CD4-positive, alpha-beta memory T cell (primary cell): ENCODE measurements at regions of chr7 and their contacts with region 1.

Region 1: GRCh38 chr7:150631866-150632864 is at the start of gene GIMAP6:
- DNase-seq: peak; percentile 36 to 51 (median 44)
- H3K4me3 ChIP-seq: peak within 1 kb of the TSS; percentile 69 to 75
- H3K4me3 Mint-ChIP-seq: peak within 1 kb of the TSS; percentile 93 to 100 (median 98)
- H3K27ac ChIP-seq: peak within 1 kb of the TSS; percentile 64
- H3K27ac Mint-ChIP-seq: peak within 1 kb of the TSS; percentile 81 to 99 (median 95)
- H3K4me1 ChIP-seq: peaks cover 79% of the 10 kb centered on the region
- H3K4me1 Mint-ChIP-seq: peaks cover 61 to 88% (median 74%) of the 10 kb centered on the region in 4 donors
- H3K27me3 ChIP-seq: no peaks in the 10 kb centered on the region
- H3K27me3 Mint-ChIP-seq: no peaks in the 10 kb centered on the region
- total RNA-seq, gene GIMAP6: 158 to 173 TPM

Region 2: GRCh38 chr7:150481186-150481920 is 150.8 kb before region 1 on chr7:
- CTCF ChIA-PET with region 1: interaction called, 3 read pairs
- POLR2A ChIA-PET with region 1: interaction called, 19 read pairs
- intact Hi-C with region 1: no loop called
- DNase-seq: peak; percentile 63 to 87 (median 69)
- H3K4me3 ChIP-seq: peak overlapping the region in 1 of 2 donors; percentile 37
- H3K4me3 Mint-ChIP-seq: peak overlapping the region; percentile 80 to 90 (median 88)
- H3K27ac ChIP-seq: peak overlapping the region; percentile 71
- H3K27ac Mint-ChIP-seq: peak overlapping the region; percentile 96 to 100 (median 99)
- H3K4me1 ChIP-seq: peaks cover 99% of the 10 kb centered on the region
- H3K4me1 Mint-ChIP-seq: peaks cover 75 to 98% (median 91%) of the 10 kb centered on the region in 4 donors
- H3K27me3 ChIP-seq: no peaks in the 10 kb centered on the region
- H3K27me3 Mint-ChIP-seq: no peaks in the 10 kb centered on the region

Region 3: GRCh38 chr7:150610233-150610632 is 21.9 kb before region 1 on chr7:
- CTCF ChIA-PET with region 1: interaction called, 6 read pairs
- POLR2A ChIA-PET with region 1: interaction called, 12 read pairs
- intact Hi-C with region 1: no loop called
- DNase-seq: no peak
- H3K4me3 ChIP-seq: no peak overlapping the region
- H3K4me3 Mint-ChIP-seq: peak overlapping the region in 1 of 8 donors; percentile 20
- H3K27ac ChIP-seq: no peak overlapping the region
- H3K27ac Mint-ChIP-seq: peak overlapping the region in 2 of 7 donors; percentile 52 to 77
- H3K4me1 ChIP-seq: peaks cover 27% of the 10 kb centered on the region
- H3K4me1 Mint-ChIP-seq: peaks cover 43 to 83% (median 67%) of the 10 kb centered on the region in 4 donors
- H3K27me3 ChIP-seq: no peaks in the 10 kb centered on the region
- H3K27me3 Mint-ChIP-seq: no peaks in the 10 kb centered on the region

Region 4: GRCh38 chr7:150668472-150668911 is 36.3 kb after region 1 on chr7:
- CTCF ChIA-PET with region 1: interaction called, 15 read pairs
- POLR2A ChIA-PET with region 1: interaction called, 189 read pairs
- intact Hi-C with region 1: loop called (anchors 2 kb)
- DNase-seq: peak; percentile 80 to 88 (median 85)
- H3K4me3 ChIP-seq: peak overlapping the region; percentile 2 to 26
- H3K4me3 Mint-ChIP-seq: peak overlapping the region; percentile 55 to 84 (median 72)
- H3K27ac ChIP-seq: peak overlapping the region; percentile 68
- H3K27ac Mint-ChIP-seq: peak overlapping the region; percentile 82 to 99 (median 98)
- H3K4me1 ChIP-seq: peaks cover 92% of the 10 kb centered on the region
- H3K4me1 Mint-ChIP-seq: peaks cover 63 to 95% (median 79%) of the 10 kb centered on the region in 4 donors
- H3K27me3 ChIP-seq: no peaks in the 10 kb centered on the region
- H3K27me3 Mint-ChIP-seq: no peaks in the 10 kb centered on the region

Region 5: DNA sequence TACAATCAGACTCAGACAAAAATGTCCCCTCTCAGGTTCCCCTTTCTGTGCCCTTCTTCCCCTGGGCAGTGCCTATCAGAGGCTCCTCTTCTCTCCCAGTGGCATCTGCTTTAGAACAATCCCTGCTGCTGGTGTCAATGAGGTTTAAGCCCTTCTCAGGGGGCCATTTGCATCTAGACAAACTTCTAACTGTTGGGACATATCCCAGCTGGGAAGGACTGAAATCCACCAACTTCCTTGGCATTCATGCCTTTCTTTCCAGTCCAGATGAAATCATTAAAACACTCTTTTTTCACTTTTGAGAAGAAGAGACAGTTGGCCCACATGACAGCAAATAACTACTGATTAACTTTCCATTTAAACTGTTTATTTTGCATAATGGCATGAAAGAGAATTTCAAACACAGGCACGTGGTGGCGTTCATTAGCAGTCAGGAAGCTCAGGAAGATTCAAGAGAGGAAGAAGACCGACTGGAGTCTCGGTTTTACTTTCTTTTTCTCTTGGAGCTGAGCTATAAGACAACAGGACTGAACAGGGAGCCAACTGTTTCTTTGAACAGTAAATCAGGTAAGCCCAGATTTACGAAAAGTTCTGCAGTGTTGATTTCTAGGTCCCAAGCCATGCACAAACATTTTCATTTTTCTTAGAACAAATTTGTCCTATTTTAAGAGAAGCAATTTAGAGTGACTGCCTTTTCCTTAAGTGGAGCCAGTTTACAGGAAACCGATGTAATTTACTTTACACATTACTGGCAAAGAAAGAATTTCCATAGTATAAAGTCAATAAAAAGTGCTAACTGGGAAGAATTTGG is 53.3 kb after region 1 on chr7 and contains the start of gene GIMAP2:
- CTCF ChIA-PET with region 1: interaction called, 3 read pairs
- POLR2A ChIA-PET with region 1: interaction called, 74 read pairs
- intact Hi-C with region 1: loop called (anchors 5 kb)
- DNase-seq: peak; percentile 64 to 69 (median 65)
- H3K4me3 ChIP-seq: peak within 1 kb of the TSS; percentile 80 to 97
- H3K4me3 Mint-ChIP-seq: peak within 1 kb of the TSS; percentile 94 to 99 (median 98)
- H3K27ac ChIP-seq: peak within 1 kb of the TSS; percentile 90
- H3K27ac Mint-ChIP-seq: peak within 1 kb of the TSS; percentile 90 to 99 (median 97)
- H3K4me1 ChIP-seq: peaks cover 60% of the 10 kb centered on the region
- H3K4me1 Mint-ChIP-seq: peaks cover 55 to 97% (median 74%) of the 10 kb centered on the region in 4 donors
- H3K27me3 ChIP-seq: no peaks in the 10 kb centered on the region
- H3K27me3 Mint-ChIP-seq: no peaks in the 10 kb centered on the region
- total RNA-seq, gene GIMAP2: 238 to 244 TPM

Region 6: DNA sequence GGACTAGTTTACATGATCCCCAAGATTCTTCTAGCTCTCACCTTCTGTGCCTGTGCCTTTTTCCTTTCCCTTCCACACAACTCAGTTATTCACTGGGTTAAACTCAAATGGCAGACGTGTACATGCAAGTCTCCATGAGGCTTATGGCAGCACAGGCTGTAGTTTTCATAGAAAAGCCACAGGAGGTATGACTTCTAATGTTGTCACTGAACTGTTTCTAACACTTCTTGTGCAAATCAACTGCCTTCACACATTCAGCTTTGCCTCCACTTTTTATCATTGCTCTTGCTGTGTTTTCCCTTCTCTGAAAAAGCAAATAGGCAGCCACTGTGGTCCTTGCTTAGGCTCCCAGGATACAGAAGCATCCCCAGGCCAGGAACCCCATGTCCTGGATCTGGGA is 99.8 kb after region 1 on chr7:
- CTCF ChIA-PET with region 1: interaction called, 6 read pairs
- POLR2A ChIA-PET with region 1: interaction called, 61 read pairs
- intact Hi-C with region 1: loop called (anchors 5 kb)
- DNase-seq: no peak
- H3K4me3 ChIP-seq: no peak overlapping the region
- H3K4me3 Mint-ChIP-seq: peak overlapping the region; percentile 9 to 95 (median 64)
- H3K27ac ChIP-seq: peak overlapping the region; percentile 6
- H3K27ac Mint-ChIP-seq: peak overlapping the region; percentile 86 to 97 (median 91)
- H3K4me1 ChIP-seq: peaks cover 76% of the 10 kb centered on the region
- H3K4me1 Mint-ChIP-seq: peaks cover 71 to 87% (median 76%) of the 10 kb centered on the region in 4 donors
- H3K27me3 ChIP-seq: no peaks in the 10 kb centered on the region
- H3K27me3 Mint-ChIP-seq: no peaks in the 10 kb centered on the region